ENCODE measurements at regions of chr5 and their contacts with region 1.

Region 1: GRCh38 chr5:128201065-128201926 is 117.7 kb downstream of the SLC12A2 start:
- DNase-seq: peak; percentile 85
- H3K4me3 ChIP-seq: peak overlapping the region; percentile 61
- H3K27ac ChIP-seq: no peak overlapping the region
- H3K4me1 ChIP-seq: peaks cover 5% of the 10 kb centered on the region; the same call in 1 of the 2 replicates
- H3K27me3 ChIP-seq: 0 out of 2 replicates have a peak, but pooled peaks cover 6% of the 10 kb centered on the region

Region 2: DNA sequence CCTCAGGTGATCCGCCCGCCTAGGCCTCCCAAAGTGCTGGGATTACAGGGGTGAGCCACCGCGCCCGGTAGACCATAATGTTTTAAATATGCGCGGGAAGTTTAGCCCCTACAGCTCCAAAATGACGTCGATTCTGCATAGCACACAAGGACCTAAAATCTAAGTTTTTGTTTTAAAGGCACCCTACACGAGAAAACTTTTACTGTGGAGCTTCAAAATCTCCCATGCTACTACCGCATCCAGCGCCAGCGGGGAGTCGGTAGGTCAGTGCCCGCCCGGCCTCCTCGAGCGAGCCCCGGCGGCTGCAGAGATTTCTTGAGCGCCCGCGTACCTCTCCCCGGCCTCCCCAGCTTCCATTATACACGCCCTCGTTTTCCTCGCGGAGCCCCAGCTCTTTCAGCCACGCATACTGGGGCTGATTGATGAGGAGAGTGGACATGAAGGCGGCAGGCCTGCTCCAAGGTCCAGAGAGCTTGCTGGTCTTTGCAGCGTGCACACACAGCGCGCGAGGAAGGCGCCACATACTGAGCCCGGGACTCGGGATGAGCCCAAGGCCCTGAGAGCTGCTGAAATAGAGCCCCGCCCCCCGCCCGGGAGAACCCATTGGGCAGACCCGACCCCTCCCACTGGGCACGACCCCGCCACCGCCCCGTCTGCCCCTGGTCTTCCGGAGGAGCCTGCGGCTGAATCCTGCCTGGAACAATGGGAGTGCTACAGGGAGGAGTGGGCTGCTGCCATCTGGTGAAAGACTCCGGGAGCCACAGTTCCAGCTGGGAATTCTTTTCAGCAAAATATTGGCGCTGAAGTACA is 1606.4 kb before region 1 on chr5 and contains the start of gene ALDH7A1:
- in situ Hi-C with region 1: no loop called
- DNase-seq: peak; percentile 89
- H3K4me3 ChIP-seq: peak within 1 kb of the TSS; percentile 85
- H3K27ac ChIP-seq: peak within 1 kb of the TSS; percentile 72
- H3K4me1 ChIP-seq: peaks cover 16% of the 10 kb centered on the region
- H3K27me3 ChIP-seq: no peaks in the 10 kb centered on the region
- total RNA-seq, gene ALDH7A1: 41.3 and 45.8 TPM in 2 replicates

Region 3: GRCh38 chr5:127564002-127564769 is 637.1 kb before region 1 on chr5:
- in situ Hi-C with region 1: loop called (anchors 10 kb)
- DNase-seq: peak; percentile 67
- H3K4me3 ChIP-seq: no peak overlapping the region
- H3K27ac ChIP-seq: no peak overlapping the region
- H3K4me1 ChIP-seq: peaks cover 21% of the 10 kb centered on the region
- H3K27me3 ChIP-seq: peaks cover 28% of the 10 kb centered on the region; the same call in 1 of the 2 replicates

Region 4: DNA sequence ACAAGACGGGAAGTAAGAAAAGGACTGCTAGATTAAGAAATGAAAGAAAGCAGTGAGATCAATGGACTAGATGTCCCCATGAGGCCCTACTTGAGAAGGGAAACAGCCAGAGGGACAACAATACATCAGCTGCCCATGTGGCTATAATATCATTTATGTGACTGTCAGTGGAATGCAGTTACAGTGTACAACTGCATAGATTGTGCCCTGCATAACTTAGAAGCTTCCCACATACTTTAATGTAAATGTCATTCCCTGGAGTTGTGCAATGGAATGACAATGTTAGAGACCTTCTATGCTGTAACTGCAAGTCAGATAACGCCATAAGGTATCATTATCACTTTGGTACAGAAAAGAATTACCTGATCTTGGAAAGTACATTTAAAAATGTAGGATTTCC is 269.3 kb after region 1 on chr5:
- in situ Hi-C with region 1: no loop called
- DNase-seq: peak; percentile 31
- H3K4me3 ChIP-seq: no peak overlapping the region
- H3K27ac ChIP-seq: no peak overlapping the region
- H3K4me1 ChIP-seq: peaks cover 14% of the 10 kb centered on the region; the same call in 1 of the 2 replicates
- H3K27me3 ChIP-seq: no peaks in the 10 kb centered on the region

Region 5: GRCh38 chr5:128844354-128844923 is 643.1 kb after region 1 on chr5:
- in situ Hi-C with region 1: loop called (anchors 25 kb)
- DNase-seq: peak; percentile 40
- H3K4me3 ChIP-seq: no peak overlapping the region
- H3K27ac ChIP-seq: no peak overlapping the region
- H3K4me1 ChIP-seq: no peaks in the 10 kb centered on the region
- H3K27me3 ChIP-seq: no peaks in the 10 kb centered on the region

Region 6: DNA sequence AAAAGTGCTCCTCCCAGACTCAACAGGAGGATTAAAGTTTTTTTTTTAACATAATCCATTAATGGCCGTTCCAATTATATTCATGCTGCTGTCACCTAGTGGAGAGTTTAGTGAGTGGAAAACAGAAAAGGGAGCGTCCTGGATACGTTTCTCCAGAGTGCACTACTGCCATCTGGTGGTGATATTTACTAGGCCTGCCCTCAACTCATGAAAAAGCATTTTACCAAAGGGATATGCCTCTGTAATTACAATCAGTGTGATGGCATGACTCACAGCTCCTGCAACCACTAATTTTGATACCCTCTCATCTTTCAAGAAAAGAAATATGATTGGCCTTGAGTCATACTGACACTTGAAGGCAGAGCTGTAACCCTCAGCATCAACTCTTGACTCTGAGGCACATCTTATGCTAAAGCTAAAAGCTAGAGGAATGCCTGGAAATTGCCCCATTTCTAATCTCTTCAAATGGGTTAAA is 1566.6 kb after region 1 on chr5:
- in situ Hi-C with region 1: loop called (anchors 25 kb)
- DNase-seq: peak; percentile 91
- H3K4me3 ChIP-seq: no peak overlapping the region
- H3K27ac ChIP-seq: no peak overlapping the region
- H3K4me1 ChIP-seq: no peaks in the 10 kb centered on the region
- H3K27me3 ChIP-seq: no peaks in the 10 kb centered on the region

Measured in GM23248 (cell line).